Right cardiac atrium (tissue), 5 donors: ENCODE measurements at regions of chrX and their contacts with region 1.

Region 1: GRCh38 chrX:23341452-23341851 is 6.8 kb downstream of the PTCHD1 start:
- DNase-seq: no peak
- ATAC-seq: no peak
- H3K4me3 ChIP-seq: no peak overlapping the region
- H3K27ac ChIP-seq: no peak overlapping the region
- H3K4me1 ChIP-seq: no peaks in the 10 kb centered on the region
- H3K27me3 ChIP-seq: no peaks in the 10 kb centered on the region

Region 2: DNA sequence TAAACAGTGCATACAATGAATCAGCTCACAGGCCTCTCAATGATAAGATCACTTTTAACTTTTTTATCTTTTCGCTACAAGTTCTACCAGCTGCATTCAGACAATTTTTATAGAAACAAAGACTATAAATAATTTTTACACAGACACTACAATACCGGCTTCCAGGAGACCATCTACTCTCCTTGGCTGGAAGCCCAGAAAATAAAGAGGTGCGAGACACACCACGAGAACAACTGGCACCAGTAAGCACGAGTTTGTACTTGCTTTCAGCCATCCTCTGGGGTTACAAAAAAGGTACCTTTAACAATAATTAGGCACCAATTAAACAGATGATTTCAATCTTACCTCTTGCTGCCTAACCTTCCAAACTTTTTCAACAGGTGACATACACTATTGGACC is 314.6 kb after region 1 on chrX:
- intact Hi-C with region 1: no loop called
- DNase-seq: no peak
- ATAC-seq: no peak
- H3K4me3 ChIP-seq: no peak overlapping the region
- H3K27ac ChIP-seq: no peak overlapping the region
- H3K4me1 ChIP-seq: no peaks in the 10 kb centered on the region
- H3K27me3 ChIP-seq: no peaks in the 10 kb centered on the region

Region 3: GRCh38 chrX:23766650-23767551 is 425.4 kb after region 1 on chrX:
- intact Hi-C with region 1: loop called in 1 of 4 experiments (anchors 10 kb)
- DNase-seq: peak in 1 of 3 donors; percentile 52
- ATAC-seq: peak in 1 of 2 donors; percentile 73
- H3K4me3 ChIP-seq: no peak overlapping the region
- H3K27ac ChIP-seq: no peak overlapping the region
- H3K4me1 ChIP-seq: no peaks in the 10 kb centered on the region
- H3K27me3 ChIP-seq: no peaks in the 10 kb centered on the region